ENCODE measurements at regions of chr1 and their contacts with region 1.

Region 1: GRCh38 chr1:112939810-112940209 is 16.2 kb downstream of the SLC16A1 start:
- DNase-seq: no peak
- H3K4me3 ChIP-seq: no peak overlapping the region
- H3K27ac ChIP-seq: no peak overlapping the region
- H3K4me1 ChIP-seq: peaks cover 0 to 24% (median 2%) of the 10 kb centered on the region in 4 donors
- H3K27me3 ChIP-seq: no peaks in the 10 kb centered on the region
- CTCF ChIP-seq: no peak

Region 2: GRCh38 chr1:113036639-113037321 is 97.0 kb after region 1 on chr1:
- intact Hi-C with region 1: loop called (anchors 10 kb)
- DNase-seq: no peak
- H3K4me3 ChIP-seq: no peak overlapping the region
- H3K27ac ChIP-seq: no peak overlapping the region
- H3K4me1 ChIP-seq: no peaks in the 10 kb centered on the region
- H3K27me3 ChIP-seq: no peaks in the 10 kb centered on the region
- CTCF ChIP-seq: no peak